Activated CD4-positive, alpha-beta T cell treated with anti-CD3 and anti-CD28 coated beads for 36 hours (primary cell): ENCODE measurements at regions of chr9 and their contacts with region 1.

Region 1: GRCh38 chr9:131733541-131734061 is 6.3 kb downstream of the RAPGEF1 start:
- DNase-seq: peak; percentile 70
- ATAC-seq: peak; percentile 9
- H3K4me3 Mint-ChIP-seq: peak overlapping the region; percentile 60
- H3K27ac Mint-ChIP-seq: peak overlapping the region; percentile 89
- H3K4me1 Mint-ChIP-seq: peaks cover 89% of the 10 kb centered on the region
- H3K27me3 Mint-ChIP-seq: no peaks in the 10 kb centered on the region

Region 2: DNA sequence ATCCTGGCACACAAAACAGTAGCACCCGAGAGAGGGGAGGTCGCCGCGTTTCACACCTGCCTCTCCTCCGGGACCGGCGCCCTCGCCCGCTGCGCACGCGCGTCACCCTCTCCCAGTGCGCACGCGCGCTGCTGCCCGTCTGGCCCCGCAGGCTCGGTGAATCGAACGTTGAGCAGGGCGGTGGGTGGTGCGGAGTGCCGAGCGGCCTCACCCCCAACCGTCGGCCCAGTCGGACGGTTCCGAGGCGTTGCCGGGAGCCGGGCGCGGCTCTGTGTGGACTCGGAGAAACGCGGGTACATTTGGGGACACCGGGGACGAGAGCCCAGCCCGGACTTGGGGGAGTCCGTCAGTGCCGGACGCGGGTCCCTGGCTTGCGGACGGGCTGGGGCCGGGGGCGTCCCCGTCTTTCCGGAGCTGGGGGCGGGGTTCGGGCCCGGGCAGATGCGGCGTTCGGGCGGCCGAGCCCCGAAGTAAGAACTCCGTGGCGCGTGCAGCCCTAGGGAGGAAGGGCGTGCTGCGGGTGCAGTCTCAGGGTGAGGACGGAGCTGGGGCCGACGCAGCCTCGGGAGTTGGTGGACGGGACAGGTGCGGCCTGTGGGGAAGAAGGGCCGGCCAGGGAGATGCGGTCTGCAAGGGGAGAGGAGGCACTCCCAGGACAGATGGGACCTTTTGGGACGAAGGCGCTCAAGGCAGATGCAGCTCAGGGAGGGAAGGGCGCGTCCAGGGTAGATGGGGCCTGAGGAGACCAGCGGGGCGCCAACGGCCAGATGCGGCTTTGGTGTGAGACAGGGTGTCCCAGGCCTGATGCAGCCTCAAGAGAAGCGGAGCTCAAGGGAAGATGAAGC is 230.6 kb before region 1 on chr9 and contains the start of gene POMT1:
- CTCF ChIA-PET with region 1: interaction called, 3 read pairs
- POLR2A ChIA-PET with region 1: no interaction called
- intact Hi-C with region 1: loop called in 1 of 2 experiments (anchors 5 kb)
- DNase-seq: peak; percentile 94
- ATAC-seq: peak; percentile 42
- H3K4me3 Mint-ChIP-seq: peak within 1 kb of the TSS; percentile 83
- H3K27ac Mint-ChIP-seq: peak within 1 kb of the TSS; percentile 84
- H3K4me1 Mint-ChIP-seq: peaks cover 53% of the 10 kb centered on the region
- H3K27me3 Mint-ChIP-seq: no peaks in the 10 kb centered on the region
- total RNA-seq, gene POMT1: 28.2 to 30.7 TPM

Region 3: DNA sequence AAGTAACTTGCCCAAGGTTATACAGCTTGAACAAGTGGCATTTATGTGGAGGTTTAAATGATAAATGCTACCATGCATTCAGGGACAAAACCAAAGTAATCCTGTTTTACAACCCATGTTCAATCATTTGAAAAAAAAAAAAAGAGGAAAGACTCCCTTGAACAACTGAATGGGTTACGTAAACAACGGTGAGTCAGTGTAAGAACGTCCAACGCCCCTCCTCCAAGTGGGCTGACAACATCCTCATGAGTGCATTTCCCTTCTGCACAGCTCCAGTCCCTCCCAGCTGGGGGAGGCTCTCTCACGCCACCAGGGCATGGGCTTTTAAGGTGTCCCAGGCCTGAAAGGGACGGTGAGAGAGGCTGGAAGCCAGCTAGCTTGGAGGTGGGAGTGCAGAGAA is 98.3 kb before region 1 on chr9:
- CTCF ChIA-PET with region 1: interaction called, 12 read pairs
- POLR2A ChIA-PET with region 1: interaction called, 7 read pairs
- intact Hi-C with region 1: loop called in 1 of 2 experiments (anchors 2 kb)
- DNase-seq: peak; percentile 87
- ATAC-seq: peak; percentile 99
- H3K4me3 Mint-ChIP-seq: no peak overlapping the region
- H3K27ac Mint-ChIP-seq: peak overlapping the region; percentile 89
- H3K4me1 Mint-ChIP-seq: peaks cover 35% of the 10 kb centered on the region
- H3K27me3 Mint-ChIP-seq: no peaks in the 10 kb centered on the region

Region 4: GRCh38 chr9:131656356-131657036 is 77.1 kb before region 1 on chr9:
- CTCF ChIA-PET with region 1: interaction called, 8 read pairs
- POLR2A ChIA-PET with region 1: interaction called, 4 read pairs
- intact Hi-C with region 1: loop called in 1 of 2 experiments (anchors 2 kb)
- DNase-seq: peak; percentile 81
- ATAC-seq: peak; percentile 68
- H3K4me3 Mint-ChIP-seq: peak overlapping the region; percentile 39
- H3K27ac Mint-ChIP-seq: peak overlapping the region; percentile 87
- H3K4me1 Mint-ChIP-seq: peaks cover 83% of the 10 kb centered on the region
- H3K27me3 Mint-ChIP-seq: no peaks in the 10 kb centered on the region

Region 5: GRCh38 chr9:131678499-131679111 is 55.0 kb before region 1 on chr9:
- CTCF ChIA-PET with region 1: interaction called, 23 read pairs
- POLR2A ChIA-PET with region 1: interaction called, 5 read pairs
- intact Hi-C with region 1: loop called in 1 of 2 experiments (anchors 2 kb)
- DNase-seq: peak; percentile 91
- ATAC-seq: peak; percentile 99
- H3K4me3 Mint-ChIP-seq: peak overlapping the region; percentile 72
- H3K27ac Mint-ChIP-seq: peak overlapping the region; percentile 87
- H3K4me1 Mint-ChIP-seq: peaks cover 88% of the 10 kb centered on the region
- H3K27me3 Mint-ChIP-seq: no peaks in the 10 kb centered on the region

Region 6: DNA sequence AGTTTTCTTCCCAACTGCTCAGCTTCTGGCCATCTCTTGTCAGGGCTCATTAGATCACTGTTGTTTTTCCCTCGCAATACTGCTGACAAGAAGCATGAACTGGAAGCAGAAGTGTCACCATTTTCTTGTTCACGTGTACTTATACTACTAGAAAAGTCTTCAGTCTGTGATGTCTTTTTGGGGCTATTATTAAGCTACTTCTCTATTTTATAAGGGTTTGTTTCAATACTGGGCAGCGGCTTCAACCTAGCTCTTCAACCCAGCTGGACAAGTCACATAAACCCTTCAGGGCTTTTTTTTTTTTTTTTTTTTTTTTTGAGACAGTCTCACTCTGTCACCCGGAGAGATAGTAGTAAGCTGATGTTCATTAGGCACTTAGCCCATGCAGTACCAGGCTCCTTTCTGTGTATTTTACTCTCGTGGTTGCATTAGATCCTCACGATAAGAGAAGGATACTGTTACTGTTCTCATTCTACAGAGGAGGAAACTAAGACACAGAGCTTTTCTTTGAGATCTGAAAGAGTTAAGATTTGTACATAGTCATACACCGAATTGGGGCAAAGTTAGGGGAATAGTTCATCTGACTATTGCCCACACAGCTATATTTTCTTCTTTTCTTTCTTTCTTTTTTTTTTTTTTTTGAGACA is 14.2 kb before region 1 on chr9:
- CTCF ChIA-PET with region 1: interaction called, 6 read pairs
- POLR2A ChIA-PET with region 1: interaction called, 3 read pairs
- intact Hi-C with region 1: loop called in 1 of 2 experiments (anchors 1 kb)
- DNase-seq: no peak
- ATAC-seq: peak; percentile 71
- H3K4me3 Mint-ChIP-seq: no peak overlapping the region
- H3K27ac Mint-ChIP-seq: peak overlapping the region; percentile 52
- H3K4me1 Mint-ChIP-seq: peaks cover 68% of the 10 kb centered on the region
- H3K27me3 Mint-ChIP-seq: no peaks in the 10 kb centered on the region

Region 7: DNA sequence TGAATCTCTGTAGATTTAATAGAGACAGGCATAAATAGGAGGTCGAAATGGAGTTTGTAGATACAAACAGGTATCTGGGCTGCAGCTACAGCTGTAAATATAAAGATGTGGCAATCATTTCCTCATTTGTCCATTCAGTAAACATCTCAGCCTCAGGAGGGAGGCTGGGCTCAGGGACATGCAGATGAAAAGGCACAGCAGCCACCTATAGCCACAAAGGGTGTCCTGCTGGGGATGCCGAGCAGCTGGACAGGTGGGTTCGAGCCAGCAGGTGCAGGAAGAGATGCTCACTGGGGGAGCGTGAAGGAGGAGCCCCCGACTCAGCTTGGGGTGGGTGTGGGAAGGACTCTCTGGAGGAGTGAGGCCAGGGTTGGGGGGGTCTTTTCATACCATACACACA is 54.7 kb after region 1 on chr9:
- CTCF ChIA-PET with region 1: no interaction called
- POLR2A ChIA-PET with region 1: no interaction called
- intact Hi-C with region 1: no loop called
- DNase-seq: no peak
- ATAC-seq: no peak
- H3K4me3 Mint-ChIP-seq: no peak overlapping the region
- H3K27ac Mint-ChIP-seq: no peak overlapping the region
- H3K4me1 Mint-ChIP-seq: no peaks in the 10 kb centered on the region
- H3K27me3 Mint-ChIP-seq: peaks cover 38% of the 10 kb centered on the region

Region 8: GRCh38 chr9:131885144-131885609 is 151.6 kb after region 1 on chr9:
- CTCF ChIA-PET with region 1: no interaction called
- POLR2A ChIA-PET with region 1: no interaction called
- intact Hi-C with region 1: no loop called
- DNase-seq: no peak
- ATAC-seq: no peak
- H3K4me3 Mint-ChIP-seq: no peak overlapping the region
- H3K27ac Mint-ChIP-seq: no peak overlapping the region
- H3K4me1 Mint-ChIP-seq: peaks cover 5% of the 10 kb centered on the region
- H3K27me3 Mint-ChIP-seq: no peaks in the 10 kb centered on the region